ENCODE measurements at regions of chr3 and their contacts with region 1.

Region 1: GRCh38 chr3:196650740-196651311 is 11.3 kb downstream of the NRROS start:
- DNase-seq: no peak
- H3K4me3 Mint-ChIP-seq: no peak overlapping the region
- H3K27ac Mint-ChIP-seq: peak overlapping the region; percentile 66
- H3K4me1 Mint-ChIP-seq: peaks cover 64% of the 10 kb centered on the region
- H3K27me3 Mint-ChIP-seq: no peaks in the 10 kb centered on the region

Region 2: DNA sequence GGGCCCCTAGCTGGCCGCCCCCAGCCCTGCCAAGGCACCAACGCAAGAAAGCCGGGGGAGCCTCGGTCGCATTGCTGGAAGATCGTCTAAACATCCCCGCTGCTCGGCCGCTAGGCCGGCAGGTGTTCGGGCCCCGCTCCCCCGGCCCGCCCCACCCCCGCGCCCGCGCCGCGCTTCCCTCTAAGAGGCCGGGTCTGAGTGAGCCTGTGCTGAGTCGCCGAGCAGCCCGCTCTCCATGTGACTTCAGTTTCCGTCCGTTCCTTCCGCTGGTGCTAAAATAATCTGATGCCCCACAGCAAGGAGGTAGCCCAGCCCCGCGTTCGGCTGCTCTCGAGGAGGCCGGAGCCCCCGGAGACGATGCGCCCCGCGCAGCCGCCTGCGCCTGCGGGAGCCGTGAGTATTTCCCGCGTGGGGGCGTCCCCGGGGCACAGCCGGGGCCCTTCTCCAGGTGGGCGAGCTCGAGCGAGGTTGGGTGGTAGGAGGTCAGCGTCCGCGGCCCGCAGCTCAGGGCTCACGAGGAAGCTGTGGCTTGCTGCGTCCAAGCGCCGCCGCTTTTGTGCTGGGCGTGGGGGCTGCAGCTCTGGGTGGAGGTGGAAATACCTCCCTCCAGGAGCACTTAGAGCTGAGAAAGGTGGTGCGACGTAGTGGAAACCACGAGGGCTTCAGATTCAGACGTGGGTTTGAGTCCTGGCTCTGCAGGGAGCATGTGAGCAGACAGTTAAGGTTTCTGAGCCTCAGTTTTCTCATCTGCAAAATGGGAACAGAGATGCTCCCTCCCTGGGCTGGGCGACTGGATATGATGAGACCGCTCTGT is 11.1 kb before region 1 on chr3 and contains the start of gene NRROS:
- CTCF ChIA-PET with region 1: interaction called, 16 read pairs
- POLR2A ChIA-PET with region 1: no interaction called
- DNase-seq: peak; percentile 73
- H3K4me3 Mint-ChIP-seq: peak within 1 kb of the TSS; percentile 92
- H3K27ac Mint-ChIP-seq: peak within 1 kb of the TSS; percentile 92
- H3K4me1 Mint-ChIP-seq: peaks cover 79% of the 10 kb centered on the region
- H3K27me3 Mint-ChIP-seq: no peaks in the 10 kb centered on the region
- total RNA-seq, gene NRROS: 36.6 to 40.6 TPM

Region 3: DNA sequence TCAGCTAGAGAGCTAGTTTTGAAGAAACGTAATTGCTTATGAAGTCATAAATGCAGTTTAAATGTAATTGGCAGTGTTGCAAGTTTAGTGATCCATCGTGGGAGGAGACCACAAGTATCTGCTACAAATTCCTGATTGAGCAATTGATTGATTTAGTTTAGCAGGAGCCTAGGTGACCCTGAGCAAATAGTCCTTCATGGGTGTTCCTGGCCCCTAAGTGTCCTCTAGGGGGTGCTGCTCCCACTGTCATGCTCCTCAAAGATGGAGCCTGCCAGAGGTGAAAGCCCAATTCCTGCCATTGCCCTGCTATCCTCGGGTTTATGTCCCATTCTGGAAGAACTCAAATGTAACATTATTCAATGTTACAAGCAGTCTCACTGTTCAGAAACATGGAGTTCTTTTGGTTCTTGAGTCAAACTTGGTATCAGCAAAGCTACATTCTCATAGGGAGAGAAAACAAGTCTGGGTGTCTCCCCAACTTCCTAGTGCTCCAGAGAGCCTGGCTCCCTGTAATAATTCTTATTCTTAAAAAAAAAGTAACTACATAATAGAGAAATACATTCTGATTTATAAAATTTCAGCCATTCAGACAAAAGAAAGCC is 187.1 kb after region 1 on chr3:
- CTCF ChIA-PET with region 1: no interaction called
- POLR2A ChIA-PET with region 1: no interaction called
- DNase-seq: peak; percentile 78
- H3K4me3 Mint-ChIP-seq: no peak overlapping the region
- H3K27ac Mint-ChIP-seq: no peak overlapping the region
- H3K4me1 Mint-ChIP-seq: peaks cover 2% of the 10 kb centered on the region
- H3K27me3 Mint-ChIP-seq: no peaks in the 10 kb centered on the region

Measured in activated CD4-positive, alpha-beta T cell treated with anti-CD3 and anti-CD28 coated beads, Interleukin-2, amount 10 ng/mL, durations not matched to agents 7 days and 5 days (primary cell).